SK-N-SH (cell line): ENCODE measurements at regions of chr11 and their contacts with region 1.

Region 1: GRCh38 chr11:62567018-62567633 is 6.6 kb downstream of the EEF1G start:
- DNase-seq: no peak
- H3K4me3 ChIP-seq: no peak overlapping the region
- H3K27ac ChIP-seq: peak overlapping the region in 1 of 2 experiments; percentile 2; a peak in 1 of 4 replicates
- H3K4me1 ChIP-seq: peaks cover 5 to 13% of the 10 kb centered on the region in 2 experiments; a peak in 3 of 4 replicates
- H3K27me3 ChIP-seq: no peaks in the 10 kb centered on the region
- CTCF ChIP-seq: no peak
- EP300 ChIP-seq: no peak
- RAD21 ChIP-seq: no peak

Region 2: DNA sequence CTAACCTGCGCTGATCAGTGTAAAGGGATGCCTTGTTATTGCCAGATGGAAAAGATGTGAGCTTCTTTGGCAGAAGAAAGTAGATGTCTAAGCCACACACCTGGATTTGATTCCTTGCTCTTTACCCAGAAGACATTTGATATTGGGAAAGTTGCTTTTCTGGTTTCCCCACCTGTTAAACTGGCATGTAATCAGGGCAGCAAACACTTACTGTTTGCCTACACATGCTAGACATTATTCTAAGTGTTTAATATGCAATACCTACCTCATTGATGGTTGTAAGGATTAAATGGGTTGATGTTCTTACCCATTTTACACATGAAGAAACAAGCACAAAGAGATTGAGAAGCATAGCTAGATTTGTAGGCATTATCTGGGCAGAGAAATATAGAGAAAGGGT is 213.3 kb before region 1 on chr11:
- CTCF ChIA-PET with region 1: no interaction called
- POLR2A ChIA-PET with region 1: no interaction called
- DNase-seq: no peak
- H3K4me3 ChIP-seq: no peak overlapping the region
- H3K27ac ChIP-seq: no peak overlapping the region
- H3K4me1 ChIP-seq: no peaks in the 10 kb centered on the region
- H3K27me3 ChIP-seq: no peaks in the 10 kb centered on the region
- CTCF ChIP-seq: no peak
- EP300 ChIP-seq: no peak
- RAD21 ChIP-seq: no peak

Region 3: GRCh38 chr11:62556108-62556871 is 10.8 kb before region 1 on chr11:
- CTCF ChIA-PET with region 1: interaction called, 10 read pairs
- POLR2A ChIA-PET with region 1: no interaction called
- DNase-seq: peak; percentile 90
- H3K4me3 ChIP-seq: no peak overlapping the region; a peak in 1 of 4 replicates
- H3K27ac ChIP-seq: peak overlapping the region; percentile 85 to 97
- H3K4me1 ChIP-seq: peaks cover 40 to 79% of the 10 kb centered on the region in 2 experiments
- H3K27me3 ChIP-seq: no peaks in the 10 kb centered on the region
- CTCF ChIP-seq: no peak
- EP300 ChIP-seq: peak in 1 of 2 experiments; percentile 42; a peak in 1 of 4 replicates
- RAD21 ChIP-seq: no peak

Region 4: GRCh38 chr11:62855571-62856332 is 288.6 kb after region 1 on chr11:
- CTCF ChIA-PET with region 1: no interaction called
- POLR2A ChIA-PET with region 1: no interaction called
- DNase-seq: peak; percentile 93
- H3K4me3 ChIP-seq: peak overlapping the region; percentile 90 to 94
- H3K27ac ChIP-seq: peak overlapping the region; percentile 61 to 93
- H3K4me1 ChIP-seq: peaks cover 14 to 16% of the 10 kb centered on the region in 2 experiments; a peak in 3 of 4 replicates
- H3K27me3 ChIP-seq: no peaks in the 10 kb centered on the region
- CTCF ChIP-seq: no peak
- EP300 ChIP-seq: no peak
- RAD21 ChIP-seq: no peak